ENCODE measurements at regions of chr1 and their contacts with region 1.

Region 1: GRCh38 chr1:94805912-94806311 is 14.2 kb upstream of the SLC44A3 start:
- DNase-seq: peak; percentile 68
- H3K4me3 Mint-ChIP-seq: no peak overlapping the region
- H3K27ac Mint-ChIP-seq: no peak overlapping the region
- H3K4me1 Mint-ChIP-seq: peaks cover 16% of the 10 kb centered on the region
- H3K27me3 Mint-ChIP-seq: no peaks in the 10 kb centered on the region
- CTCF ChIP-seq: peak; percentile 96

Region 2: GRCh38 chr1:94039514-94039870 is 766.4 kb before region 1 on chr1:
- CTCF ChIA-PET with region 1: interaction called, 5 read pairs
- POLR2A ChIA-PET with region 1: no interaction called
- intact Hi-C with region 1: loop called (anchors 5 kb)
- DNase-seq: peak; percentile 80
- H3K4me3 Mint-ChIP-seq: no peak overlapping the region
- H3K27ac Mint-ChIP-seq: no peak overlapping the region
- H3K4me1 Mint-ChIP-seq: peaks cover 19% of the 10 kb centered on the region
- H3K27me3 Mint-ChIP-seq: no peaks in the 10 kb centered on the region
- CTCF ChIP-seq: peak; percentile 89

Region 3: DNA sequence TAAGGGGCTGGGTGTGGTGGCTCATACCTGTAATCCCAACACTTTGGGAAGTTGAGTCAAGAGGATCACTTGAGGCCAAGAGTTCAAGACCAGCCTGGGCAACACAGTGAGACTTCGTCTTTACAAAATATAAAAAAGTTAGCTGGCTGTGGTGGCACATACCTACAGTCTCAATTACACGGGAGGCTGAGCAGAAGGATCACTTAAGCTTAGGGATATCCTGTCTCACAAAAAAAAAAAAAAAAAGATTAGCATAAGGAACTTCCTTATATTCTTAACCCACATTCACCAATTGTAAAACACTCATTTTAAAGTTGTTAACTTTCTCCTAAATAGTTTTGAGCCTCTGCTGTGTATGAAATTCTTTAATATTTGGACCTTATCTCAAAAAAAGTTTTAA is 334.6 kb before region 1 on chr1:
- CTCF ChIA-PET with region 1: interaction called, 21 read pairs
- POLR2A ChIA-PET with region 1: no interaction called
- intact Hi-C with region 1: no loop called
- DNase-seq: no peak
- H3K4me3 Mint-ChIP-seq: no peak overlapping the region
- H3K27ac Mint-ChIP-seq: no peak overlapping the region
- H3K4me1 Mint-ChIP-seq: no peaks in the 10 kb centered on the region
- H3K27me3 Mint-ChIP-seq: no peaks in the 10 kb centered on the region
- CTCF ChIP-seq: no peak

Region 4: DNA sequence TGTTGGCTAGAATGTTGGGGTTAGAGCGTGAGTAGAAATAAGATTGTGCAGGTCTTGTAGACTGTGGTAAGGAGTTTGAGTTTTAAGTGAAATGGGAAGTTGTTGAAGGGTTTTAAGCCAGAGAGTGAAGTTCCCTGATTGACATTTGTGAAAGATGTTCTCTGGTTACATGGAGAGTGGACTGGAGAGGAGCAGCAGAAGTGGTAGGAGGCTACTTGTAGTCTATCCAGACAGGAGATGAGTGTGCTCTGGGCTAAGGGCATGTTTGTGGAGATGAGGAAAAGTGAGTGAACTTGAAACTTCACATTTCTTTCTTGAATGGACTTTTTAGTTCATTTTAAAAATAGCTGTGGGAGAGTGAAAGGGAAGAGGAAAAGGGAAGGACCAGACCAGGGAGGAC is 301.3 kb before region 1 on chr1:
- CTCF ChIA-PET with region 1: interaction called, 22 read pairs
- POLR2A ChIA-PET with region 1: interaction called, 3 read pairs
- intact Hi-C with region 1: no loop called
- DNase-seq: no peak
- H3K4me3 Mint-ChIP-seq: no peak overlapping the region
- H3K27ac Mint-ChIP-seq: no peak overlapping the region
- H3K4me1 Mint-ChIP-seq: peaks cover 6% of the 10 kb centered on the region
- H3K27me3 Mint-ChIP-seq: no peaks in the 10 kb centered on the region
- CTCF ChIP-seq: no peak

Region 5: GRCh38 chr1:94541175-94542087 is 264.5 kb before region 1 on chr1 and contains the start of gene F3:
- CTCF ChIA-PET with region 1: interaction called, 457 read pairs
- POLR2A ChIA-PET with region 1: interaction called, 6 read pairs
- intact Hi-C with region 1: loop called (anchors 2 kb)
- DNase-seq: peak; percentile 91
- H3K4me3 Mint-ChIP-seq: peak within 1 kb of the TSS; percentile 92
- H3K27ac Mint-ChIP-seq: peak within 1 kb of the TSS; percentile 97
- H3K4me1 Mint-ChIP-seq: peaks cover 64% of the 10 kb centered on the region
- H3K27me3 Mint-ChIP-seq: no peaks in the 10 kb centered on the region
- CTCF ChIP-seq: no peak
- total RNA-seq, gene F3: 173 and 296 TPM in 2 replicates

Region 6: DNA sequence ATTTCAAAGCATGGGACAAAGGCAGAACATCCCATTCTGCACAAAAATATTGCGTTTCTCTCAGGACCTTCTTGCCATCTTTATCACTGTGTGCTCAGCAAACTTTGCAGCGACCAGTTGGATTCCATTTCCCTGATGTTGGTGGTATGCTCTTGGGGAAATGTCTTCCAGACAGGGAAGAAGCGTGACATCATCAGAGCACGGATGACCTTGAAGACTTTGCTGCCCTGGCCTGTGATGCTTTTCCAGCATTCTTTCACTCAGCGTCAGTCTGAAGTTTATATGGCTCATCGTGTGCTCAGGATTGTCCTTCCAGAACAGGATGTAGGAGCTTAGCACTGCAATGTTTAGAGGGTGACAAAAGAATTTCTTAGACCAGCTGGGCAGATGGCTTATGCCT is 133.0 kb before region 1 on chr1:
- CTCF ChIA-PET with region 1: no interaction called
- POLR2A ChIA-PET with region 1: no interaction called
- intact Hi-C with region 1: no loop called
- DNase-seq: no peak
- H3K4me3 Mint-ChIP-seq: no peak overlapping the region
- H3K27ac Mint-ChIP-seq: no peak overlapping the region
- H3K4me1 Mint-ChIP-seq: no peaks in the 10 kb centered on the region
- H3K27me3 Mint-ChIP-seq: no peaks in the 10 kb centered on the region
- CTCF ChIP-seq: no peak

Region 7: GRCh38 chr1:94713472-94714141 is 92.3 kb before region 1 on chr1:
- CTCF ChIA-PET with region 1: interaction called, 11 read pairs
- POLR2A ChIA-PET with region 1: interaction called, 3 read pairs
- intact Hi-C with region 1: no loop called
- DNase-seq: peak; percentile 98
- H3K4me3 Mint-ChIP-seq: no peak overlapping the region
- H3K27ac Mint-ChIP-seq: peak overlapping the region; percentile 97
- H3K4me1 Mint-ChIP-seq: peaks cover 33% of the 10 kb centered on the region
- H3K27me3 Mint-ChIP-seq: no peaks in the 10 kb centered on the region
- CTCF ChIP-seq: no peak

Region 8: DNA sequence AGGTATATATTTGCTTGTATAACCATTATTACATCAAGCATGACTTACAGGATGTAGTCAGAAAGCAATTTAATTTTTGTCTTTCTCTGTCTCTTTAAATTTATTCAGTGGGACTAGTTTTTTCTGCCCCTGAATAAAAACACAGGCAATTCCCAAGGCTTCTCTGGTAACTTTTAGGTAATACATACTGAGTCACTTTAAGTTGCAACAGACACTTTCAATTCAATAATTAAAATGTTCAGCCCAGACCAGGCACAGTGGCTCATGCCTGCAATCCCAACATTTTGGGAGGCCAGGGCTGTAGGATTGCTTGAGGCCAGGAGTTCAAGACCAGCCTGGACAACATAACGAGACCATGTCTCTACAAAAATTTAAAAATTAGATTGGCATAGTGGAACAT is 26.5 kb after region 1 on chr1:
- CTCF ChIA-PET with region 1: interaction called, 30 read pairs
- POLR2A ChIA-PET with region 1: interaction called, 3 read pairs
- intact Hi-C with region 1: no loop called
- DNase-seq: peak; percentile 28
- H3K4me3 Mint-ChIP-seq: no peak overlapping the region
- H3K27ac Mint-ChIP-seq: no peak overlapping the region
- H3K4me1 Mint-ChIP-seq: no peaks in the 10 kb centered on the region
- H3K27me3 Mint-ChIP-seq: no peaks in the 10 kb centered on the region
- CTCF ChIP-seq: no peak